ENCODE measurements at regions of chr3 and their contacts with region 1.

Region 1: GRCh38 chr3:57692259-57693147 is at the start of gene DENND6A:
- DNase-seq: peak; percentile 73 to 98 (median 94)
- ATAC-seq: peak; percentile 73
- H3K4me3 ChIP-seq: peak within 1 kb of the TSS; percentile 53
- H3K4me3 Mint-ChIP-seq: peak within 1 kb of the TSS; percentile 93
- H3K27ac ChIP-seq: peak within 1 kb of the TSS; percentile 47 to 94
- H3K27ac Mint-ChIP-seq: peak within 1 kb of the TSS; percentile 94
- H3K4me1 ChIP-seq: peaks cover 31% of the 10 kb centered on the region
- H3K4me1 Mint-ChIP-seq: peaks cover 46% of the 10 kb centered on the region
- H3K27me3 ChIP-seq: no peaks in the 10 kb centered on the region
- H3K27me3 Mint-ChIP-seq: no peaks in the 10 kb centered on the region
- CTCF ChIP-seq: no peak
- total RNA-seq, gene DENND6A: 67.2 to 74.4 TPM

Region 2: GRCh38 chr3:57227204-57227929 is 465.1 kb before region 1 on chr3 and contains the start of gene APPL1:
- CTCF ChIA-PET with region 1: no interaction called
- POLR2A ChIA-PET with region 1: interaction called, 3 read pairs
- intact Hi-C with region 1: loop called in 1 of 2 experiments (anchors 10 kb)
- DNase-seq: peak; percentile 61 to 93 (median 84)
- ATAC-seq: peak; percentile 88
- H3K4me3 ChIP-seq: peak within 1 kb of the TSS; percentile 80
- H3K4me3 Mint-ChIP-seq: peak within 1 kb of the TSS; percentile 95
- H3K27ac ChIP-seq: no peak within 1 kb of the TSS
- H3K27ac Mint-ChIP-seq: peak within 1 kb of the TSS; percentile 82
- H3K4me1 ChIP-seq: peaks cover 10% of the 10 kb centered on the region
- H3K4me1 Mint-ChIP-seq: peaks cover 33% of the 10 kb centered on the region
- H3K27me3 ChIP-seq: no peaks in the 10 kb centered on the region
- H3K27me3 Mint-ChIP-seq: no peaks in the 10 kb centered on the region
- CTCF ChIP-seq: no peak
- total RNA-seq, gene APPL1: 21.3 to 22.9 TPM

Region 3: GRCh38 chr3:57597122-57597923 is 95.2 kb before region 1 on chr3 and contains the start of gene ARF4:
- CTCF ChIA-PET with region 1: no interaction called
- POLR2A ChIA-PET with region 1: interaction called, 41 read pairs
- intact Hi-C with region 1: loop called (anchors 1 to 2 kb)
- DNase-seq: peak; percentile 97 to 100 (median 99)
- ATAC-seq: peak; percentile 87
- H3K4me3 ChIP-seq: peak within 1 kb of the TSS; percentile 92
- H3K4me3 Mint-ChIP-seq: peak within 1 kb of the TSS; percentile 85
- H3K27ac ChIP-seq: peak within 1 kb of the TSS; percentile 98 to 99
- H3K27ac Mint-ChIP-seq: peak within 1 kb of the TSS; percentile 97
- H3K4me1 ChIP-seq: peaks cover 33% of the 10 kb centered on the region
- H3K4me1 Mint-ChIP-seq: peaks cover 58% of the 10 kb centered on the region
- H3K27me3 ChIP-seq: no peaks in the 10 kb centered on the region
- H3K27me3 Mint-ChIP-seq: no peaks in the 10 kb centered on the region
- CTCF ChIP-seq: peak; percentile 48
- total RNA-seq, gene ARF4: 56.7 to 59.9 TPM

Region 4: DNA sequence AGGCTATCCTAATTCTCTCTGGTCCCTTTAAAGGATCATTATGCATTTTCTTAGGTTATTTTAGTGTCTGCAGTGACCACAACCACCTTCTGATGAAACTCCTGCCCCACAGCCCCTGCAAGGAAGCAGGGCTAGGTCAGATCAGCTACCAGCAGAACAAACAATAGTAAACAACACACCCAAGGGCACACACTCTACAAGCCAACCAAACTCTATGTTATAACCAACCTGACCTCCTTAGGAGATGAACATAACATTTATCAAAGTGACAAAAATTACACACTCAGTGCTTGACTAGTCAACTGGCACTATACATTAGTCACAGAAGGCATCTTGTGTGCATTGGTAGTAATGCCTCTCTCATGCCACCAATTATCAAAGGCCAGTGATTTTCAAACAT is 17.0 kb before region 1 on chr3:
- CTCF ChIA-PET with region 1: interaction called, 4 read pairs
- POLR2A ChIA-PET with region 1: interaction called, 8 read pairs
- intact Hi-C with region 1: loop called in 1 of 2 experiments (anchors 1 kb)
- DNase-seq: no peak
- ATAC-seq: no peak
- H3K4me3 ChIP-seq: no peak overlapping the region
- H3K4me3 Mint-ChIP-seq: no peak overlapping the region
- H3K27ac ChIP-seq: peak overlapping the region in 1 of 2 donors; percentile 31
- H3K27ac Mint-ChIP-seq: peak overlapping the region; percentile 48
- H3K4me1 ChIP-seq: peaks cover 20% of the 10 kb centered on the region
- H3K4me1 Mint-ChIP-seq: peaks cover 70% of the 10 kb centered on the region
- H3K27me3 ChIP-seq: no peaks in the 10 kb centered on the region
- H3K27me3 Mint-ChIP-seq: no peaks in the 10 kb centered on the region
- CTCF ChIP-seq: no peak

Region 5: GRCh38 chr3:57815036-57815435 is 122.5 kb after region 1 on chr3:
- CTCF ChIA-PET with region 1: no interaction called
- POLR2A ChIA-PET with region 1: no interaction called
- intact Hi-C with region 1: loop called in 1 of 2 experiments (anchors 5 kb)
- DNase-seq: peak; percentile 9 to 72 (median 32)
- ATAC-seq: peak; percentile 84
- H3K4me3 ChIP-seq: no peak overlapping the region
- H3K4me3 Mint-ChIP-seq: no peak overlapping the region
- H3K27ac ChIP-seq: peak overlapping the region in 1 of 2 donors; percentile 23
- H3K27ac Mint-ChIP-seq: peak overlapping the region; percentile 10
- H3K4me1 ChIP-seq: peaks cover 16% of the 10 kb centered on the region
- H3K4me1 Mint-ChIP-seq: peaks cover 52% of the 10 kb centered on the region
- H3K27me3 ChIP-seq: no peaks in the 10 kb centered on the region
- H3K27me3 Mint-ChIP-seq: no peaks in the 10 kb centered on the region
- CTCF ChIP-seq: no peak

Measured in CD4-positive, alpha-beta T cell (primary cell).